K562 (cell line): ENCODE measurements at regions of chr7 and their contacts with region 1.

Region 1: GRCh38 chr7:992709-993607 is 10.0 kb downstream of the CYP2W1 start:
- DNase-seq: peak; percentile 87 to 96 (median 90)
- ATAC-seq: peak; percentile 97
- H3K4me3 ChIP-seq: no peak overlapping the region
- H3K27ac ChIP-seq: no peak overlapping the region
- H3K4me1 ChIP-seq: peaks cover 0 to 82% of the 10 kb centered on the region in 2 experiments; a peak in 2 of 5 replicates
- H3K27me3 ChIP-seq: no peaks in the 10 kb centered on the region
- CTCF ChIP-seq: peak; percentile 99 to 100 (median 99)
- EP300 ChIP-seq: peak; percentile 20; the same call in 1 of the 2 replicates
- POLR2A ChIP-seq: no peak; the same call in 1 of the 2 replicates
- RAD21 ChIP-seq: peak; percentile 100

Region 2: DNA sequence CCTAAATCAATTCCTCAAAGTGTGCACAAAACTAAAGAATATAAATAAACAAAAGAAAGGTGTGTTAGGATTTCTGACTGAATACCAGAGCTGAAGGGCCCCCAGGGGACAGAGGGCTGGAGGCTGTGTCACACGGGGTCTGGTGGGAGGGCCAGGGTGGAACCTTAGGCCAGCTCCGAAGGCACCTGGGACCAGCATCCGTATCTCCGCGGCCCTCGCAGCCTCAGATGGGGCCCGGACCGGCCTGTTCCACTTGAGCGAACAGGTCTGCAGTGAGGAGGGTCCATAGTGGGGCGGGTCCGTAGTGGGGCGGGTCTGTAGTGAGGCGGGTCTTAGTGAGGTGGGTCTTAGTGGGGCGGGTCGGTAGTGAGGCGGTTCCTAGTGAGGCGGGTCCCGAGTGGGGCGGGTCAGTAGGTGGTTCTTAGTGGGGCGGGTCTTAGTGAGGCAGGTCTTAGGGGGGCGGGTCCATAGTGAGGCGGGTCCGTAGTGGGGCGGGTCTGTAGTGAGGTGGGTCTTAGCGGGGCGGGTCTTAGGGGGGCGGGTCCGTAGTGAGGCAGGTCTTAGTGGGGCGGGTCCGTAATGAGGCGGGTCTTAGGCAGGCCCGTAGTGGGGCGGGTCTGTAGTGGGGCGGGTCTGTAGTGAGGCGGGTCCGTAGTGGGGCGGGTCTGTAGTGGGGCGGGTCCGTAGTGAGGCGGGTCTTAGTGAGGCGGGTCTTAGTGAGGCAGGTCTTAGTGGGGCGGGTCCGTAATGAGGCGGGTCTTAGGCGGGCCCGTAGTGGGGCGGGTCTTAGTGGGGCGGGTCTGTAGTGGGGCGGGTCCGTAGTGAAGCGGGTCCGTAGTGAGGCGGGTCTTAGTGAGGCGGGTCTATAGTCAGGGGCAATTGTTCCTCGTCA is 66.5 kb after region 1 on chr7:
- CTCF ChIA-PET with region 1: interaction called, 111 read pairs
- POLR2A ChIA-PET with region 1: interaction called, 6 read pairs
- in situ Hi-C with region 1: loop called (anchors 5 kb)
- intact Hi-C with region 1: no loop called
- DNase-seq: peak; percentile 89 to 94 (median 93)
- ATAC-seq: peak; percentile 90
- H3K4me3 ChIP-seq: peak overlapping the region; percentile 14; the same call in 1 of the 2 replicates
- H3K27ac ChIP-seq: peak overlapping the region; percentile 16; the same call in 2 of the 3 replicates
- H3K4me1 ChIP-seq: peaks cover 32 to 81% of the 10 kb centered on the region in 2 experiments
- H3K27me3 ChIP-seq: no peaks in the 10 kb centered on the region
- CTCF ChIP-seq: no peak
- EP300 ChIP-seq: no peak
- POLR2A ChIP-seq: no peak
- RAD21 ChIP-seq: no peak

Region 3: GRCh38 chr7:1159891-1160668 is 167.1 kb after region 1 on chr7 and contains the start of gene ZFAND2A:
- CTCF ChIA-PET with region 1: no interaction called
- POLR2A ChIA-PET with region 1: interaction called, 5 read pairs
- in situ Hi-C with region 1: loop called (anchors 25 kb)
- intact Hi-C with region 1: no loop called
- DNase-seq: peak; percentile 97 to 99 (median 98)
- ATAC-seq: peak; percentile 99
- H3K4me3 ChIP-seq: peak within 1 kb of the TSS; percentile 99
- H3K27ac ChIP-seq: peak within 1 kb of the TSS; percentile 93
- H3K4me1 ChIP-seq: peaks cover 0 to 23% of the 10 kb centered on the region in 2 experiments; a peak in 3 of 5 replicates
- H3K27me3 ChIP-seq: no peaks in the 10 kb centered on the region
- CTCF ChIP-seq: no peak
- EP300 ChIP-seq: no peak
- POLR2A ChIP-seq: peak; percentile 87
- RAD21 ChIP-seq: no peak
- polyA plus RNA-seq, gene ZFAND2A: 54.3 to 56.8 TPM

Region 4: DNA sequence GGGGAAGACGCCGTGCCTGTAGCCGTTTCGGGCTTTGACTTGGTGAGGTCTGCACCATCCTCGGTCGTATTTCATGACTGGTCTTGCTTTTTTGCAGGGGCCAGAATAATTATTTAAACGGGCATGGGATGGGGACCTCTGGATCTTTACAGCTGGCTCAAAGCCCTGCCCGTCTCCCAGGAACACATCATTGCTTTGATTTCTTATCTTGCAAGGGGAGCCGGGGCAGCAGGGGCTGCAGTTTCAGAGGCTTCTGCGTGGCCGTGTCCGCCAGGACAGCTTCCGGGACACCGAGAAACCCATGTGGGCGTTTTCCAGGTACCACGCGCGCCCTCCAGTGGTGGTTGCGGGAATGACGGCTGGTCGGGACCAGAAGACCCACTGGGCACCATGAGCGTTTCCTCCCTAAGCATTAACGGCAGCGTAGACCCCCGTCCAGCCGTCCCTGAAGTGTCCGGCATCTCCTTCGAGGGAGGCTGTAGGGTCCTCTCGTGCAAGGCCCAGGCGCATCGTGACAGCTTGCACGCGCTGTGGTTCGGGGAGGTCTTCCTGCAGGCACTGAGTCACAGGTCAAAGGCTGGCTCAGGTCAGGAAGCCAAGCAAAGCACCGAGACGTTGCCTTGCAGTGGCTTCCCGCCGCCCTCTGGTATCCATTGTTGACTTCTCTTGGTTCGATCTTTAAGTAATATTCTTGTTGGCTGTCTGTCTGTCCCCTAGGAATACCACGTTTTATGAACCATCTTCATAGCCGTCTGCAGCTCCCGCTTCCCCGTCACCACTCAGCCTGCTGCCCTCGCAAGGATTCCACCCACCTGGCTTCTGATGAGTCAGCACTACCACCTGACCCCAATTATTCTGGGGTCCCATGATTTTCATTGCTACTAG is 183.3 kb after region 1 on chr7:
- CTCF ChIA-PET with region 1: interaction called, 37 read pairs
- POLR2A ChIA-PET with region 1: interaction called, 4 read pairs
- in situ Hi-C with region 1: loop called (anchors 25 kb)
- intact Hi-C with region 1: loop called (anchors 1 kb)
- DNase-seq: peak; percentile 79 to 90 (median 82)
- ATAC-seq: peak; percentile 95
- H3K4me3 ChIP-seq: peak overlapping the region; percentile 14
- H3K27ac ChIP-seq: peak overlapping the region; percentile 54; the same call in 2 of the 3 replicates
- H3K4me1 ChIP-seq: peaks cover 9 to 25% of the 10 kb centered on the region in 2 experiments
- H3K27me3 ChIP-seq: peaks cover 12 to 21% of the 10 kb centered on the region in 2 experiments; a peak in 4 of 5 replicates
- CTCF ChIP-seq: peak; percentile 91 to 97 (median 92)
- EP300 ChIP-seq: no peak
- POLR2A ChIP-seq: 0 out of 2 replicates have a peak, but pooled peaks have one; percentile 32
- RAD21 ChIP-seq: peak; percentile 57 to 74